ENCODE measurements at regions of chr11 and their contacts with region 1.

Region 1: DNA sequence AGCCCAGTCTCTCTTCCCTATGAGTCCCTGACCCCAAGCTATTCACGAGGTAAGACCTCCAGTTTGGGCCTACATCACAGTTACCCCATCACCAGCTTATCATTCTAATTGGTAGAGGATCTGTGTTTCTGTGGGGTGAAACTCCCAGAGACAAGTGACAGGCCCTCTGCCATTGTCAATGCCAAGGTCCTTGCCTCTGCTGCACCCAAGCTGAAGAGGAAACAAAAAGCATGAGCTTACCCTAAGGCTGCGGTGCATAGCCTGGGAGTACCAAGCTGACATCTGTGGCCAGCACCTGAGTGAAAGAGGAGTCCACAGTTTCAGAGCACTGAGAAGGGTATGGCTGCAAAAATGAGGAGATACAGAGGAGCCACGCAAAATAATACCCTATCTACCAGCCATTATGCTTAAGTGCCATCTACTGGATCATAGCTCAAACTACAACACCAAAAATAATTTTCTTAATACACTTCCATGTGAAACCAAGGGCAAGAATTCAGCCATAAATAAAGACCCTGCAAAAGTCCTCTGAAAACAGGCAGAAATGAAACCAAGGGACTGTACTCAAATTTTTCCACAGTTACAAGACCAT is 62.3 kb upstream of the ANO5 start:
- DNase-seq: peak in 1 of 4 donors; percentile 9
- ATAC-seq: peak; percentile 77
- H3K4me3 ChIP-seq: no peak overlapping the region
- H3K27ac ChIP-seq: no peak overlapping the region
- H3K4me1 ChIP-seq: peaks cover 4% of the 10 kb centered on the region
- H3K27me3 ChIP-seq: no peaks in the 10 kb centered on the region
- CTCF ChIP-seq: peak; percentile 43 to 85 (median 74)
- POLR2A ChIP-seq: no peak

Region 2: GRCh38 chr11:21933095-21933494 is 197.5 kb before region 1 on chr11:
- intact Hi-C with region 1: loop called (anchors 10 kb)
- DNase-seq: no peak
- ATAC-seq: no peak
- H3K4me3 ChIP-seq: no peak overlapping the region
- H3K27ac ChIP-seq: no peak overlapping the region
- H3K4me1 ChIP-seq: no peaks in the 10 kb centered on the region
- H3K27me3 ChIP-seq: no peaks in the 10 kb centered on the region
- CTCF ChIP-seq: peak; percentile 24 to 70 (median 54)
- POLR2A ChIP-seq: no peak